Activated CD4-positive, alpha-beta T cell treated with anti-CD3 and anti-CD28 coated beads, Interleukin-2, amount 10 ng/mL, durations not matched to agents 24 days and 14 days (primary cell): ENCODE measurements at regions of chr3 and their contacts with region 1.

Region 1: GRCh38 chr3:195748661-195749060 is 27.9 kb downstream of the MUC20 start:
- DNase-seq: no peak
- H3K4me3 Mint-ChIP-seq: peak overlapping the region; percentile 42
- H3K27ac Mint-ChIP-seq: peak overlapping the region; percentile 49
- H3K4me1 Mint-ChIP-seq: peaks cover 13% of the 10 kb centered on the region
- H3K27me3 Mint-ChIP-seq: peaks cover 6% of the 10 kb centered on the region

Region 2: GRCh38 chr3:195729476-195730251 is 19.0 kb before region 1 on chr3:
- intact Hi-C with region 1: loop called (anchors 1 kb)
- DNase-seq: no peak
- H3K4me3 Mint-ChIP-seq: no peak overlapping the region
- H3K27ac Mint-ChIP-seq: no peak overlapping the region
- H3K4me1 Mint-ChIP-seq: no peaks in the 10 kb centered on the region
- H3K27me3 Mint-ChIP-seq: no peaks in the 10 kb centered on the region

Region 3: DNA sequence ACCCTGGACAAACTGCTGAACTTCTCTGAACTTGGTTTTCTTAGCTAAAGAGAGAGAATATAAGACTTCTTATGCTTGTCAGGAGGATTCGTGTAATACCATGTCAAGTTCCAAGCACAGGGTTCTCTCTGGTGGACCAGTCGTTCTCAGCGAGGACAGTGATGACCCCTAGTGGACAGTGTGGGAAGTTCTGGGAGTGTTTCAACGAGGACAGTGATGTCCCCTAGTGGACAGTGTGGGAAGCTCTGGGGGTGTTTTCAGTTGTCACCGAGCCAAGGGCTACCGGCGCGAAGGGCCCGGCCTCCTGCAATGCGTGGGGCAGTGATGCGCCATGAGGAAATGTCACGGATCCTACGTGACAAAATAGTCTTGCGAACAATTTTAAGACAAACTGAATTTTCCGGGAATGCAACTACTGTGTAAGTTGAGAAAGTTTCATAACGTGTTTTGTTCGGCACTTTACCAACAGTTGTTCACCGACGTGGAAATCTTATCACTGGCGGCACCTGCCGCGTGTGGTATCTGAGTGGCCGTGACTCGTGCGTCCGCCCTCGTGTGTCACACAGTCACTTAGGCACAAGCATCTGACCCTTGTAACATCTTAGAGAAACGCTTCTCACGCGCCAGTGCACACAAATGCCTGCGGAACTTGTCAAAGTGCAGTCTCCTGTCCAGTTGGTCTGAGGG is 102.3 kb after region 1 on chr3:
- intact Hi-C with region 1: loop called (anchors 5 kb)
- DNase-seq: peak; percentile 97
- H3K4me3 Mint-ChIP-seq: peak overlapping the region; percentile 5
- H3K27ac Mint-ChIP-seq: no peak overlapping the region
- H3K4me1 Mint-ChIP-seq: peaks cover 9% of the 10 kb centered on the region
- H3K27me3 Mint-ChIP-seq: no peaks in the 10 kb centered on the region